HAP-1 (cell line): ENCODE measurements at regions of chr3 and their contacts with region 1.

Region 1: GRCh38 chr3:76044601-76045600 is 259.6 kb upstream of the ZNF717 start:
- DNase-seq: peak; percentile 50 to 72
- H3K4me3 ChIP-seq: no peak overlapping the region
- H3K4me1 ChIP-seq: peaks cover 17% of the 10 kb centered on the region
- H3K27me3 ChIP-seq: no peaks in the 10 kb centered on the region

Region 2: DNA sequence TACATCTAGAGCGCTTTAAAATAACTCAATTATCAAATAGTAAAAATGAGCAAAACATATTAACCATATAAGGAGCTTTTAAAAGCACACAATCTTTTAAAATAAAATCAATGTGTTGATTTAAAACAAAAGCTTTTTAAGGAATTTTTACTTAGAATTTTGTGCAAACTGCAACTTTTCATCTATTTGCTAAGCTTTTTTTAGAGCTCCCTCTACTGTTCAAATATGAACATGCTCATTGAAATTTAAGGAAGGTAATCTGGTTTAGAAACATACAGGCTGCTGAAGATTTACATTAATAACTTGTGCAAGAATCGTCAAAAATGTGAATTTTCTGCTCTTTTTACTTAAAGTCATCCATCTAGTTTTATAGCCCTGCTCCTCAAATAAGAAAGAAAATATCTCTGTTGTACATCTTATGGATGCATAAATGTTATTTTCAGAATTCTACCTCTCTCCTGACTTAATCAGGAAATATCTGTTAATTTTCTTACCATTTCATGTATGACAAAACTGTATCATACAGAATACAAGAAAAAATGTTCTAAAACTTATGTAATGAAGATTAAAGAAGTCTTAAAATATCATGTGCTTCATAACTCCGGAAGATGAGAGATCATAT is 525.6 kb after region 1 on chr3:
- in situ Hi-C with region 1: loop called (anchors 25 kb)
- DNase-seq: peak in 1 of 2 experiments; percentile 32
- H3K4me3 ChIP-seq: no peak overlapping the region
- H3K4me1 ChIP-seq: peaks cover 6% of the 10 kb centered on the region; the same call in 1 of the 2 replicates
- H3K27me3 ChIP-seq: no peaks in the 10 kb centered on the region